HepG2 (cell line): ENCODE measurements at regions of chr11 and their contacts with region 1.

Region 1: DNA sequence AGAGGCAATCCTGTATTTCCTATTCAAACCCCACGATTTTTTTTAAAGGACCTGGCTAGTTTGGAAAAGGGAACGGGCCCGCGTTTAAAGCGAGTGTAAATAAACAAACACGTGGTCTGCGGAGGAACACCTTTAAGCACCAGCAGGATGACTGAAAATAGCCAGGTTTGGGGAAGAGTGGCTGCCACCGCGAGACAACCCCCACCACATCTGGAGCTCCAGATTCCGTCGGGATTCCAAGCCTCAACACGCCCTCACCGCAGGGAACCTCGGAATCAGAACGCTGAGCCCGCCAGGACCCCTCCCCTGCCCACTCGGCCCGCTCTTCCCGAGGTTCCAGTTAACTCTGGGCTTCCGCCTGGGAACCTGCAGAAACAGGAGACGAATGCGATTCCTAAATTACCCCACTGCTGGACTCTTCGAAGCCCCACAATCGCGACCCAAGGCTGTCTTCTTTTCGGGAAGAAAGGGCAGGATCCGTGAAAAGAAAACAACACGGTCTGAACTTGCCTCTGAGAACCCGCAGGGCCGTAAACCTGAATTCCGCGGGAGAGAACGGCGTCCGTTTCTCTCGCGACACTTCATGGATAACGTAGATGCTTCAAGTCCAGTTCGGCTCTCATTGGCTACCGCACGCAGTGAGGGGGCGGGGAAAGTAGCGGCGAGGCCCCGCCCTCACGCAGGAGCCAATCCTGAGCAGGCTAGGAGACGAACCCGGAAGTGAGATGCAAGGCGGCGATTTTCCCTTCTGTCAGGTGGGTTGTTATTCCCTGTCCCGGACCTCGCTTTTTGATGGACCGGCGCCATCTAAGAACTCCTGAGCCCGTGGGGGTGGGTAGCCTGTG is at the starts of genes ANKRD49 and MRE11:
- DNase-seq: peak; percentile 97
- ATAC-seq: peak; percentile 99
- H3K4me3 ChIP-seq: peak within 1 kb of the TSS; percentile 80 to 90 (median 86)
- H3K27ac ChIP-seq: peak within 1 kb of the TSS; percentile 89
- H3K4me1 ChIP-seq: peaks cover 29% of the 10 kb centered on the region
- H3K27me3 ChIP-seq: no peaks in the 10 kb centered on the region; a peak in 1 of 5 replicates
- CTCF ChIP-seq: no peak
- EP300 ChIP-seq: no peak
- POLR2A ChIP-seq: peak; percentile 63 to 81
- RAD21 ChIP-seq: no peak
- total RNA-seq, gene ANKRD49: 14.2 and 18.0 TPM in 2 replicates
- total RNA-seq, gene MRE11: 37.3 and 58.2 TPM in 2 replicates

Region 2: DNA sequence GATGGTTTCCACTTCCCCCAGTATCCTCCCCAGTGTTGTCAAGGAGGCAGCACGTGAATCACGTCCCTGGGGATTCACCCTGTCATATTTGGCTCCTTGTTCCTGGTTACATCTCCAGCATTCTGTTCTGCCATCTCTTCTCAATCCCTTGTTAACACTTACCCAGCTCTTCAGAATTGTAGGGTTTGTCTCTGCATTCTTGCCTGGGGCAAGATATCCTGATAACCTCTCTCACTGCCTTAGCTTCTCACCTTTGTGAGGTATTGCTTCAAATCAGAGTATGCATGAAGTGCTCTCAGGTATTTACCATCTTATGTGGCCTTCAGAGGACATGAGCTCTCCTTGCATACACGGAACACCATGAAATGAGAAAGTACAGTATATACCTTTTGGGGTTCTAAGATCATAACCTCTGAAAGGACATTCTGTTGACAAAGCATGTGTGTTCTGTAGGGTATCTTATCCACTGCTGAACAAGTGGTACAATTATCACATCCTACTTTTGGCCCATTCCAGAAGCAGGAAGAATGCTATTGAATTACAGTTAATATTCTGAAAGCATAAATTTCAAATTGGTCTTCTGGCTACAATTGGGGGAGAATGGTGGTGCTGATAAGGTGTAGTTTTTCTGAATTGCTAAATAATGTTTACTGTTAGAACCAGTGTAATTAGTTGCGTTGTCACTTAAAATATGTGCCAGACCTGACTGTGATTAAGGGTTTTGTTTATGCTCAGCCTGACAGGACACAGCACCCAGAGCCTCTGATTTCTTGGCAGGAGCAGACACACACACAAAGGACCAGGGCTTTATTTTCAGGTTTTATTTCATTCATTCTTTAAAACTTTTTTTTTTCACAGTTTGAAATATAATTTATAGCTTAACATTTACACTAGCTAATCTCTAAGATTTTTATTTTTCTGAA is 675.8 kb before region 1 on chr11:
- CTCF ChIA-PET with region 1: no interaction called
- POLR2A ChIA-PET with region 1: no interaction called
- in situ Hi-C with region 1: no loop called
- intact Hi-C with region 1: no loop called
- DNase-seq: no peak
- ATAC-seq: no peak
- H3K4me3 ChIP-seq: no peak overlapping the region
- H3K27ac ChIP-seq: no peak overlapping the region
- H3K4me1 ChIP-seq: peaks cover 28% of the 10 kb centered on the region
- H3K27me3 ChIP-seq: no peaks in the 10 kb centered on the region
- CTCF ChIP-seq: no peak
- EP300 ChIP-seq: no peak
- POLR2A ChIP-seq: no peak
- RAD21 ChIP-seq: no peak

Region 3: DNA sequence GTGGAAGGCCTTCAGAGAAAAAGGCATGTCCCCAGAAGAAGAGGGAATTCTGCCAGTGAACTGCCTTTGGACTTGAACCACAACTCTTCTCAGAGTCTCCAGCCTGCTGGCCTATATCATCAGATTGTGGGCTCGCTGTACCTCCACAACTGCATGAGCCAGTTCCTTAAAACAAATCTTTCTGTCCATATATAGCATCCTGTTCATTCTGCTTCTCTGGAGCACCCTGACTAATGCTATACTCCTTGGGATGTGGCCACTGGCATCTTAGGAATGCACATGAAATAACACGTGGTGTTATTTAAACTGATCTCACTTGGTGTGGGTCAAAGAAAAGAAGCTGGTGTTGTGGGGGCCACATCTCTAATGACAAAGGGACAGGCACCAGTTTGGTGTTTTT is 584.8 kb before region 1 on chr11:
- CTCF ChIA-PET with region 1: no interaction called
- POLR2A ChIA-PET with region 1: no interaction called
- in situ Hi-C with region 1: no loop called
- intact Hi-C with region 1: loop called (anchors 5 kb)
- DNase-seq: no peak
- ATAC-seq: no peak
- H3K4me3 ChIP-seq: no peak overlapping the region
- H3K27ac ChIP-seq: no peak overlapping the region
- H3K4me1 ChIP-seq: no peaks in the 10 kb centered on the region; the same call in 1 of the 2 replicates
- H3K27me3 ChIP-seq: no peaks in the 10 kb centered on the region; a peak in 1 of 5 replicates
- CTCF ChIP-seq: no peak
- EP300 ChIP-seq: no peak
- POLR2A ChIP-seq: no peak
- RAD21 ChIP-seq: no peak

Region 4: DNA sequence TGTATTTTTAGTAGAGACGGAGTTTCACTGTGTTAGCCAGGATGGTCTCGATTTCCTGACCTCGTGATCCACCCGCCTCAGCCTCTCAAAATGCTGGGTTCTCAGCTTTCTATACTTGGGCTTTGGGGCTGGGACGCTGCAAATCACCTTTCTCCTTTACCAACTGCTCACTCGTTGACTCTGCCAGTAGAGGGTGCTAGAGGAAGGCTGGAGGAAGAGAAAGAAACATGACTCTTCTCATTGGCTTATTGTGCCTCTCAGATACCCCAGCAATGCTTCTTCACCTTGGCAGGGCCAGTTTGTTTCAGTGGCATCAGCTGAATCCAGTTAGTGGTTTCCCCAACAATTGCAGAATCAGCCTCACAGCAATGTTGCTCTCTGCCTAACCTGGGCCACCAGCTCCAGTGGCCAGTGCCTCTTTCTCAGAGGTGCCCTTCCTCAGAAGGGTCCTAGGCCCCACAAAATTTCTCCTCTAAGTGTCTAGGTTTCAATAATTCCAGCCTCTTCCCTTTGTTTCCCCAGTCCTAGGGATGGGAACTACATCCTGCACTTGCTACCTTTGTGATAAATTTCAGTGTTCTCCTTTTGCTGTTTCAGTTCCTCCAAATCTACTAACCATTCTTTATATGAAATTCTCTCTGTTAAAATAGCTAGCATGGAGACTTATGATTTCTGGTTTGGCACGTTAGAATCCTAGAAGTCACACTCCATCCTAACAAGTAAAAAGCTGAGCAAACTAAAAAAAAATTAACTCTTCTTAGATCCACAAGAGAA is 571.6 kb before region 1 on chr11:
- CTCF ChIA-PET with region 1: no interaction called
- POLR2A ChIA-PET with region 1: no interaction called
- in situ Hi-C with region 1: no loop called
- intact Hi-C with region 1: loop called (anchors 5 kb)
- DNase-seq: peak; percentile 56
- ATAC-seq: peak; percentile 85
- H3K4me3 ChIP-seq: no peak overlapping the region
- H3K27ac ChIP-seq: no peak overlapping the region
- H3K4me1 ChIP-seq: peaks cover 19% of the 10 kb centered on the region
- H3K27me3 ChIP-seq: no peaks in the 10 kb centered on the region
- CTCF ChIP-seq: peak; percentile 87
- EP300 ChIP-seq: no peak
- POLR2A ChIP-seq: no peak
- RAD21 ChIP-seq: peak; percentile 76